ENCODE measurements at regions of chr12 and their contacts with region 1.

Region 1: GRCh38 chr12:6533923-6534694 is at the start of gene GAPDH:
- DNase-seq: peak; percentile 93 to 96
- ATAC-seq: peak; percentile 76
- total RNA-seq, gene GAPDH: 2,230 to 2,756 TPM

Region 2: DNA sequence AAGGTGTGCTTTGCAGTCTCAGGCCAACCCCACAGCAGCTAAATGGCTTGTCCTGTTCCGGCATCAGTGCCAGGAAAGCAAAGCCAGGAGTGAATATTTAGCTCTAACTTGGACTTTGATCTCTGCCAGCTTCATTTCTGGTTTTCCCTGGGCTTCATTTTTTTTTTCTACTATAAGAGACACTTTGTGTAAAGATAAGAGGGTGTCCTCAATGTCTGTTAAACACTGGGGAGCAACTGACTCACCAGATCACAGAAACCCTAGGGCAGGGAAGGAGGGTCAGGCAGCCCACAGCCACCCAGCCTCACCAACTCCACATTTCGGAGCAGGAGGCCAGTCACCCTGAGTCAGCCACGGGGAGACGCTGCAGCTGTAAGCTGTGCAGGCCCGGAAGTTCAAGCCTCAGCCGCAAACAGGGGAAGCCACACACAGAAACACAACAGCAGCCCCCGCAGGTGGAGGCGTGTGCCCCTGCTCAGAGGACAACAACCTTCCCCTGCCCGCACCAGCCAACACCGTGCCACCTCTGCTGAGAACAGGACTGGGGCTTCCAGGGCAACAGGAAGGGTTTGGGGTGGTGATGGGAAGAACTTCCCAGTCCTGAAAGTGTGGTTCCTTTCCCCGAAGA is 198.5 kb before region 1 on chr12:
- intact Hi-C with region 1: loop called in 1 of 2 experiments (anchors 10 kb)
- DNase-seq: peak; percentile 80 to 88
- ATAC-seq: peak; percentile 46

Region 3: DNA sequence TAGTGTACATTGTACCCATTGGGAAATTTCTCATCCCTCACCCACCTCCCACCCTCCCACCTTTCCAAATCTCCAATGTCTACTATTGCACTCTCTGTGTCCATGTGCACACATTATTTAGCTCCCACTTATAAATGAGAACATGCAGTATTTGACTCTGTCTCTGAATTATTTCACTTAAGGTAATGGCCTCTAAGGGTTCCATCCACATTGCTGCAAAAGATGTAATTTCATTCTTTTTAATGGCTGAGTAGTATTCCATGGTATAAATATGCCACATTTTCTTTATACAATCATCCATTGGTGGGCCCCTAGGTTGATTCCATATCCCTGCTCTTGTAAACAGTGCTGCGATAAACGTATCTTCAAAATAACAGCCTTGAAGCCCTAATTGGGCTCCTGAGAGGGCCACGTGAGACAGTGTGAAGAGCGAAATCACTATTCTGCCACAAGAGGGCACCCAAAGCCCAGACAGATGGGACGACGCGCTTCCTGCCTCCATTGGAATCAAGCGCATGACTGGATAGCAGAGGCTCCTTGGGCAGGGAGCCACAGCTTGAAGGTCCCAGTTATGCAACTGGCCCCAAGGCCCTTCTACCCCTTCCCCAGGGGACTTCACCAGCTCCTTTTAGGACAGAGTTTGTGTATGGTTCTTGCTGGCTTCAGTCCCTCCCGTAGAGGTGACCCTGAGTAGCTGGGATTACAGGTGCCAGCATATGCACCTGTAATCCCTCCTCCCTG is 110.7 kb before region 1 on chr12:
- intact Hi-C with region 1: loop called in 1 of 2 experiments (anchors 10 kb)
- DNase-seq: peak; percentile 80 to 85
- ATAC-seq: peak; percentile 98